IMR-90 (cell line): ENCODE measurements at regions of chr2 and their contacts with region 1.

Region 1: DNA sequence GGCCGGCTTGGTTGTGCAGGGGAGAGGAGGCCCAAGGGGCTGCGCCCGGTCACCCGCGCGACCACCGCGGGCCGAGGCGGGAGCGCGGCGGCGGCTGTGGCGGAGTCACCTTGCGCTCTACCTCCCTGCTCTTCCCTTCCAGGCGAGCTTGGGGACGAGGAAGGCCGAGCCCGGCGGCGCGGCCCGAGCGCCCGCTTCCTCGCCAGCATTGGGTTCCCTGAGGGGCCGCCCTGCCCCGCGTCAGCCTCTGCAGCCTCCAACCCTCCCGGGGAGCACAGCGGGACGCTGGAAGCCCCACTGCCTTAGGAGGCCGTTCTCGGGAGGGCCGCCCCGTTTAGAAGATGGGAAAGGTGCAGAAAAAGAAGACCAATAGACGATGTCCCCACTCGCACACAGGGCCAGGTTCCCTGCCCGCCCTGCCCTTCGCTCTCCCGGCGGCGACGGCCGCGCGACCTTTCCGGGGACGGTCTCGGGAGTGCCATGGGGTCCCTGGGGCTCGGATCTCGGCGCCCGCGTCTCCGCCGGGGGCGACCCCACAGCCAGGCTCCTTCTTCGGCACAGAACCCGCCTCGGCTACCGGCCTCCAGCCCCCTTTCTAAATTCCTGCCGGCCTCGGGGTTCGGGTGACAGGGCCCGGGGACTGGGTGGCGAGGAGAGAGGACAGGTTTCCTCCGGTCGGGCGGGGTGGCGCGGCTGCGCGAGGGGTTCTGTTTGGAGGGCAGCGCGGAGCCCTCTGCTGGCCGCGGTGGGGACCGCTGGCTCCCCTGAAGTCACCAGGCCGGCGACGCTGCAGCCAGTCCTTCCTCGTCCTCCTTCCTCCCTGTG is 85.5 kb downstream of the HS6ST1 start:
- DNase-seq: peak; percentile 66
- ATAC-seq: peak; percentile 91
- H3K4me3 ChIP-seq: peak overlapping the region; percentile 40
- H3K27ac ChIP-seq: no peak overlapping the region; the same call in 1 of the 2 replicates
- H3K4me1 ChIP-seq: peaks cover 15% of the 10 kb centered on the region
- H3K27me3 ChIP-seq: no peaks in the 10 kb centered on the region; the same call in 1 of the 2 replicates
- CTCF ChIP-seq: peak; percentile 76
- POLR2A ChIP-seq: no peak
- RAD21 ChIP-seq: peak; percentile 66

Region 2: GRCh38 chr2:128062571-128062970 is 170.6 kb before region 1 on chr2:
- CTCF ChIA-PET with region 1: interaction called, 3 read pairs
- POLR2A ChIA-PET with region 1: no interaction called
- dilution Hi-C with region 1: no loop called
- in situ Hi-C with region 1: no loop called
- intact Hi-C with region 1: loop called (anchors 5 kb)
- DNase-seq: no peak
- ATAC-seq: no peak
- H3K4me3 ChIP-seq: no peak overlapping the region
- H3K27ac ChIP-seq: no peak overlapping the region
- H3K4me1 ChIP-seq: no peaks in the 10 kb centered on the region
- H3K27me3 ChIP-seq: peaks cover 2% of the 10 kb centered on the region
- CTCF ChIP-seq: no peak
- POLR2A ChIP-seq: no peak
- RAD21 ChIP-seq: no peak

Region 3: DNA sequence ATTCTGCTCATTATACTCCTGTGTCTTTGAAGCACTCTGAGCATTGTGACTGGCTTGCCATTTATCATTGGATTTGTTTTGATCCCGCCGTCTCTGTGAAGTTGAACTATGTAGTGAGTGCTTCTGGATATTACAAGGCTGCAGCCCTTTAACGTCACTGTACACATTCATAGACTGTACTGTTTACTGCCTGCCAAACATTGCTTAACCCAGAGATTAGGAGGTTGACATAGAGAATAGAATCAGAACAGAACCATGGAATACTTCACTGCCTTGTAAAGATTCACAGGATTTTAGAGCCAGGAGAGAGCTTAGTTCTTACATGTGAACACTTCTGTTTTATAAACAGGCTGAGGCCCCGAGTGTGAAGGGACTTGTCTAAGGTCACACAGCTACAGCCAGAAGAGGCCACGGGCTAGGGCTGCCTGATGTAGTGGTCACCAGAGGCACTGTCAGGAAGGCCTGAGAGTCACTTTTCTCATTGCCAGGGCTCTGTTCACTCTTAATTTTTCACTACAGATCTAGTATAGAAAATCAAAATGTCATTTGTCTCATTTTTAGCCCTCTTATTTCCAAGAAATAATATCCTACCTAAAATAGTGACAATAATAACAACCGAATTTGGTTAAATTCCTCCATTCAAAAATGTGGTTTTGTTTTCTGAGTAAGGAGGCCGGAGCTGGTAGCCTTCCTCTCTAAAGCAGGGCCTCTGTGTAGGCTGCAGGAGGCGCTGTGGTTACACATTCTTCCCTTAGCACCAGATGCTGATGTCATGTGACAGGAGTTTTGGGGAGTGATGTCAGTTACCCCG is 54.3 kb before region 1 on chr2:
- CTCF ChIA-PET with region 1: no interaction called
- POLR2A ChIA-PET with region 1: no interaction called
- dilution Hi-C with region 1: no loop called
- in situ Hi-C with region 1: no loop called
- intact Hi-C with region 1: loop called (anchors 1 kb)
- DNase-seq: peak; percentile 89
- ATAC-seq: peak; percentile 79
- H3K4me3 ChIP-seq: no peak overlapping the region
- H3K27ac ChIP-seq: peak overlapping the region; percentile 88; the same call in 1 of the 2 replicates
- H3K4me1 ChIP-seq: peaks cover 13% of the 10 kb centered on the region
- H3K27me3 ChIP-seq: no peaks in the 10 kb centered on the region
- CTCF ChIP-seq: peak; percentile 95
- POLR2A ChIP-seq: no peak
- RAD21 ChIP-seq: peak; percentile 89

Region 4: GRCh38 chr2:128215897-128216642 is 17.1 kb before region 1 on chr2:
- CTCF ChIA-PET with region 1: no interaction called
- POLR2A ChIA-PET with region 1: no interaction called
- dilution Hi-C with region 1: no loop called
- in situ Hi-C with region 1: no loop called
- intact Hi-C with region 1: no loop called
- DNase-seq: no peak
- ATAC-seq: no peak
- H3K4me3 ChIP-seq: no peak overlapping the region
- H3K27ac ChIP-seq: no peak overlapping the region
- H3K4me1 ChIP-seq: no peaks in the 10 kb centered on the region
- H3K27me3 ChIP-seq: peaks cover 13% of the 10 kb centered on the region
- CTCF ChIP-seq: no peak
- POLR2A ChIP-seq: no peak
- RAD21 ChIP-seq: no peak

Region 5: DNA sequence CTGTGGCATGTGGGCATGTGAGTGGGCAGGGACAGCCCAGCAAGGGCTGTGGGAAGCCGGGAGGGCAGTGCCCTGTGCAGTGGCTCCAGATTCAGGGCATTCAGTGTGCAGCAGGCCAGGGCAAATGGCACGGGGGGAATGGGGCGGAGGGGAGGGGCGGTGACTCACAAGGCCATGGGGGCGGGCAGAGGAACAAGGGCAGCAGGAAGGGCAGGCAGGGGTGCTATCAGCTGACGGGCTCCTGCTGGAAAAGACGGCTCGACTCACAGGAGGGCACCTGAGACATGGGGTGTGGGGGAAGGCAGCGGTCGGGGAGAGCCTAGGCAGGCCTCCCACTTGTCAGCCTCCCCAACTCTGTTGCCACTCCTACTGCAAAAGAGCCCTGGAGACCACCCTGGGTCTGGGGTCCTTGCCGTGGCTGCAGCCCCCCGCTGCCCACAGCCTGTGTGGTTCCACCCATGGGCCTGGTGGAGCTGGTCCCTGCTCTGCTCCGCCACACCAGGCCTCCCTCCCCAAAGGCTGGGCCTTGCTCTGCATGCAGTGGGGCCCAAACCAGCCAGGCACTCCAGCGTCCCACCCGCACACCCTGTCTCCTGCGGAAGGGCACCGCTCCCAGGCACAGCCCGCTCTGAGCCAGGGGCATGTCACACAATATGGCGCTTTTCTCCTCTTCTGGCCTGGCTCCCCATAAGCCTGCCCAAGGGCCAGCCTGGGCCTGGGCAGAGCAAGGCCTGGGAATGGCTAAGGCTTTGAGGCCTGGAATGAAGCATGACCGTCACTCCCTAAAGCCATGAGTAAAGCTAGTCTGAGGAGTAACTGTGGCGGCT is 59.6 kb after region 1 on chr2:
- CTCF ChIA-PET with region 1: no interaction called
- POLR2A ChIA-PET with region 1: no interaction called
- dilution Hi-C with region 1: no loop called
- in situ Hi-C with region 1: no loop called
- intact Hi-C with region 1: no loop called
- DNase-seq: no peak
- ATAC-seq: peak; percentile 24
- H3K4me3 ChIP-seq: no peak overlapping the region
- H3K27ac ChIP-seq: peak overlapping the region; percentile 25; the same call in 1 of the 2 replicates
- H3K4me1 ChIP-seq: peaks cover 38% of the 10 kb centered on the region
- H3K27me3 ChIP-seq: no peaks in the 10 kb centered on the region
- CTCF ChIP-seq: no peak
- POLR2A ChIP-seq: no peak
- RAD21 ChIP-seq: no peak

Region 6: DNA sequence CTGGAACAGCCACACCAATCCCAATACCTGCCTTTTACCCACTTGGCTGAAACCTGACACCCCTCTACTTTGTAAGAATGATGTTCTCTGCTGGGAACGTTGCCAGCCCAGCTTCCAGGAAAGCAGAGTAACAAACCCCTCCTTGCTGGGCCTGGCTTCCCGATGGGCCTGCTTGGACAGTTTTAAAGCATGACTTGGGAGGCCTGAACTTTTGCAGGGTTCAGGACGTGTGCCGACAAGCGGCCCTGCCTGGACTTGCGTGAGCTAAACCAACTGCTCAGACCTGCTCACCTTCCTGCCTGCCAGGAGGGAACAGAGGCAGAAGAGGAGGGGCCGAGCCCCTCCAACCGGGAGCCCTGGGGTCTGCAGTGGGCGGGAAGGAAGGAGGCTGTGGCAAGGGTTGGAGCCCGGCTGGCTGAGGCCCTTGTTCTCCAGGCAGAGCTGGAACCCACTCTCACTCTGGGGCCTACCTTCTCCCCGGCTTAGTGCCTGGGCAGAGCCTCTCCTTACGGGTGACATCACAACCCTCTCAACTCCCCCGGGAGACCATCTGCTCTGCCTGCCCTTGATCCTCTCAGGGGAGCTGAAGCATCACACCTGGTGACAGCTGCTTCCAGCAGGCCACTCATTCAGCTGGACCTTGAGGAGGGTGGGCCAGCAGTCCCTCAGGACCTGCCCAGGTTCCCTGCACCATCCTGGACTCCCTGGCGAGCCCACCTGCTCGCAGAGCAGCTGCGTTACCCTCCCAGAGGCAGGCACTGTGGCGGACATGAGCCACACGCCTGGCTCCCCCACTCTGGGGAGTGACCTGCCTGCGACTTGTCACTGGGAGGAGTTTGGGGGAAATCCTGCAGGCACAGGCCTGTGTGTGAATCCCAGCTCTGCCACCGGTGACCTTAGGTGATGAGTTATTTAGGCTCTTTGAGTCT is 72.2 kb after region 1 on chr2:
- CTCF ChIA-PET with region 1: interaction called, 3 read pairs
- POLR2A ChIA-PET with region 1: no interaction called
- dilution Hi-C with region 1: no loop called
- in situ Hi-C with region 1: no loop called
- intact Hi-C with region 1: loop called (anchors 2 kb)
- DNase-seq: peak; percentile 98
- ATAC-seq: peak; percentile 30
- H3K4me3 ChIP-seq: no peak overlapping the region
- H3K27ac ChIP-seq: peak overlapping the region; percentile 95
- H3K4me1 ChIP-seq: peaks cover 81% of the 10 kb centered on the region
- H3K27me3 ChIP-seq: no peaks in the 10 kb centered on the region
- CTCF ChIP-seq: 0 out of 2 replicates have a peak, but pooled peaks have one; percentile 8
- POLR2A ChIP-seq: peak; percentile 22
- RAD21 ChIP-seq: peak; percentile 5; the same call in 1 of the 2 replicates